ENCODE measurements at regions of chr7 and their contacts with region 1.

Region 1: GRCh38 chr7:100407285-100408180 is 21.0 kb downstream of the ZCWPW1 start:
- DNase-seq: peak; percentile 66
- ATAC-seq: peak; percentile 98
- H3K4me3 ChIP-seq: no peak overlapping the region
- H3K27ac ChIP-seq: no peak overlapping the region
- H3K4me1 ChIP-seq: peaks cover 7% of the 10 kb centered on the region
- H3K27me3 ChIP-seq: no peaks in the 10 kb centered on the region
- CTCF ChIP-seq: peak; percentile 69 to 82 (median 71)
- EP300 ChIP-seq: no peak
- POLR2A ChIP-seq: no peak
- RAD21 ChIP-seq: peak; percentile 87

Region 2: DNA sequence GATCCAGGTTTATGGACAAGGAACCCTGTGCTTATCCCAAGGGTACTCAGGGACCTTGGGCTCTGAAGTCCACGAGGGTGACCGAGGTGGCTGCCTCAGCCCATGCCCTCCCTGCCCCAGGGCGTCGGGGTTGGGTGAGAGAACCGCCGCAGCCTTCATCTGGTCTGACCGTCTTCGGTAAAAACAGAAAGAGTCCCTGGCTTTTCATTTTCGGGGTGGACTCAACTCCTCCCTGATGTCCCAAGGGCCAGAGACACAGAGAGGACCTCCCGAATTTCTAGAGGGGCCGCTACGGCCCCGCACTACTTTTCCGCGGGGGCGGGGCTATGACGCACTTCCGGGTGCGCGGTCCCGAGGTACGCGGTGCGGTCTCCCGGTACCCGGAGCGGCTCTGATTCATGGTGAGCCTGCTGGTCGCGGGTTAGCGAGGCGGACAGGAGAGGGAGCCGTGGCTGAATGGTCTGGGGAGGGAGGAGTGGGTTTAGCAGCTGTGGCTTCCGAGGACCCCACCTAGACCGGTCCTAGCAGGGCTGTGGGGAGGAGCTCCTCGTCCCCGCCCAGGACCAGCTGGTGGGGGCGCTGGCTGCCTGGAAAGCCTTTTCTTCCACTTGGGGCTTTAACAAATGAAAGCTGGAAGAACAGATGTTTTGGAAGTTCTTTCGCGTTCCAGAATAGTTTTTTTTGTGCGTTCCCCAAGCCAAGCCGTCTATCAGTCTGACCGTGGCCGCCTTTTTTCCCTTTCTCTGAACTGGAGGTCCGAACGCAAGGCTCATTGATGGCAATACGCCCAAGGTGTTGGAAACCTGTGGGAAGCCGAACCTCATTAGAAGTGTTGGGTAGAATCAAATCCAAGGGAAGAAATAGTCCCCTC is 357.9 kb before region 1 on chr7 and contains the start of gene ZSCAN21:
- CTCF ChIA-PET with region 1: no interaction called
- POLR2A ChIA-PET with region 1: no interaction called
- RAD21 ChIA-PET with region 1: no interaction called
- SMC1A ChIA-PET with region 1: no interaction called
- in situ Hi-C with region 1: no loop called
- intact Hi-C with region 1: no loop called
- DNase-seq: peak; percentile 25
- ATAC-seq: peak; percentile 95
- H3K4me3 ChIP-seq: peak within 1 kb of the TSS; percentile 83
- H3K27ac ChIP-seq: peak within 1 kb of the TSS; percentile 82
- H3K4me1 ChIP-seq: peaks cover 7% of the 10 kb centered on the region
- H3K27me3 ChIP-seq: no peaks in the 10 kb centered on the region
- CTCF ChIP-seq: peak in 2 of 3 experiments; percentile 15; a peak in 2 of 6 replicates
- EP300 ChIP-seq: no peak
- POLR2A ChIP-seq: peak; percentile 95
- RAD21 ChIP-seq: no peak
- polyA plus RNA-seq, gene ZSCAN21: 1.9 to 3.1 TPM

Region 3: DNA sequence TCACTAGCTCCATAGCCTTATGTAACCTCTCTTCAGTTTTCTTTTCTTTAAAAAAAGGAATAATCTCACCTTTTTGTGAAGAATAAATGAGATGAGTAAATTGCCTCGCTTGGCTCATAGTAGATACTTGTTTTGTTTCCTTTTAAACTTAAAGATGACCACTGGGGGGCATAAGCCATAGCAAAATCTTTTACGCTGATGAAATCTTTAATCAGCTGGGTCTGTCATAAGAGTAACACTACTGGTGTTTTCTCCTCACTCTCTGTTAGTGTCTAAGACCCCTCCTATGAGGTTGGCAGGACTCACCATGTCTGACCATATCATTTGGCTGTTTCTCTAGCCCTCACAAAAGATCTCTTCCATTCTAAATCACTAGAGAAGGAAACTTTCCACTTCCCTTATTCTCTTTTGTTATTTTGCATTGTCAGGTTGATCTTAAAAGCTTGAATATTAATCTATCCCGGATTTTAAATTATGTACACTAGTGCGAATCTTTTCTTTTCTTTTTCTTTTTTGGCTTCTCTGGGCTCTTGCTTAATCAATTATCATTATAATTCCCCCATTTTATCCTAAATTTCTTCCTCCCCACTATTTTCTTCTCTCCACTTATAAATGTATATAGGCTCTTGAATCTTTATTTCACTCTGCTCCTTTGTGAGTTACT is 217.4 kb before region 1 on chr7:
- CTCF ChIA-PET with region 1: interaction called, 19 read pairs
- POLR2A ChIA-PET with region 1: no interaction called
- RAD21 ChIA-PET with region 1: interaction called, 5 read pairs
- SMC1A ChIA-PET with region 1: interaction called, 9 read pairs
- in situ Hi-C with region 1: no loop called
- intact Hi-C with region 1: no loop called
- DNase-seq: no peak
- ATAC-seq: peak; percentile 83
- H3K4me3 ChIP-seq: no peak overlapping the region
- H3K27ac ChIP-seq: no peak overlapping the region
- H3K4me1 ChIP-seq: peaks cover 29% of the 10 kb centered on the region
- H3K27me3 ChIP-seq: no peaks in the 10 kb centered on the region
- CTCF ChIP-seq: peak; percentile 42 to 55 (median 44); a peak in 5 of 6 replicates
- EP300 ChIP-seq: no peak
- POLR2A ChIP-seq: no peak
- RAD21 ChIP-seq: peak; percentile 71

Region 4: DNA sequence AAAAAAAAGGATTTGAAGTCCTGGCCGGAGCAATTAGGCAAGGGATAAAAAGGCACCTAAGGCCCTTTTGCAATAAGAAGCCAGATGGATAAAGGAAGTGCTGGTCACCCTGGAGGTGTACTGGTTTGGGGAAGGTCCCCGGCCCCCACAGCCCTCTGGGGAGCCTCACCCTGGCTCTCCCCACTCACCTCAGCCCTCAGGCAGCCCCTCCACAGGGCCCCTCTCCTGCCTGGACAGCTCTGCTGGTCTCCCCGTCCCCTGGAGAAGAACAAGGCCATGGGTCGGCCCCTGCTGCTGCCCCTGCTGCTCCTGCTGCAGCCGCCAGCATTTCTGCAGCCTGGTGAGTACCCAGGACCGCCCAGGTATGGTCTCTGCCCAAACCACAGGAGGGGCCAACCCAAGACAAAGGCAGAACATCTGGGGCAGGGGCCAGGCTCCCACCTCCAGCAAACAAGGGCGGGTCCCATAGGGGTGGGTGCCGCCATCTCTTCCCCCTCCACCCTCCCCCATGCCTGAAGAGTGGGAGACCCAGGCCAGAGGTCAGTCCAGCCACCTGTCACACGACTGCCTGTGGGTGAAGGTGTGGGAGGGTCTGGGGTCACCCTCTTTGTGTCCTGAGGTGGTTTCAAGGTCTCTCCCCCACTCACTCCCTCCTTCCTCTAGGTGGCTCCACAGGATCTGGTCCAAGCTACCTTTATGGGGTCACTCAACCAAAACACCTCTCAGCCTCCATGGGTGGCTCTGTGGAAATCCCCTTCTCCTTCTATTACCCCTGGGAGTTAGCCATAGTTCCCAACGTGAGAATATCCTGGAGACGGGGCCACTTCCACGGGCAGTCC is 49.3 kb before region 1 on chr7 and contains the start of gene PILRB:
- CTCF ChIA-PET with region 1: interaction called, 37 read pairs
- POLR2A ChIA-PET with region 1: interaction called, 3 read pairs
- RAD21 ChIA-PET with region 1: interaction called, 11 read pairs
- SMC1A ChIA-PET with region 1: interaction called, 19 read pairs
- in situ Hi-C with region 1: no loop called
- intact Hi-C with region 1: loop called (anchors 1 kb)
- DNase-seq: no peak
- ATAC-seq: peak; percentile 89
- H3K4me3 ChIP-seq: no peak within 1 kb of the TSS
- H3K27ac ChIP-seq: peak within 1 kb of the TSS; percentile 62
- H3K4me1 ChIP-seq: peaks cover 14% of the 10 kb centered on the region
- H3K27me3 ChIP-seq: no peaks in the 10 kb centered on the region
- CTCF ChIP-seq: peak; percentile 23 to 51 (median 48); a peak in 4 of 6 replicates
- EP300 ChIP-seq: no peak
- POLR2A ChIP-seq: peak; percentile 17; the same call in 1 of the 2 replicates
- RAD21 ChIP-seq: peak; percentile 31
- polyA plus RNA-seq, gene PILRB: 2.6 to 5.6 TPM

Region 5: DNA sequence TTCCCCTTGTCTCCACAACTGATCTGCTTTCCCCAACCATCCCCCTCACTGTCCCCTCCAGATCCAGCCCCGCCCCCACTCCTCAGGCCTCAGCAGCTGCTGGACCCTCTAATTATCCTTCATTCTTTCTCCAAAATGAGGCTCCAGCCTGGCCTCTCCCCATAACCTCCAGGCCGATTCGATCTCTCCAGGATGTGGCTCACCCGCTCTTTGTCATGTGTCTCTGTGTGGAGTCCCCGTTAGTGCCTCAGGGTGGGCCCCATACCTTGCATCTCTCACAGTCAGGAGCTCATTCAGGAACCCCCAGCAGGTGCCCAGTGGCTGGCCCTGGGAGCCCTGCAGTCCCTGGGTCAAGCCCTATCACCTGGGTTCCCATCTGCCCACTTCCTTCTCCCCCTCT is 32.9 kb before region 1 on chr7:
- CTCF ChIA-PET with region 1: interaction called, 134 read pairs
- POLR2A ChIA-PET with region 1: interaction called, 10 read pairs
- RAD21 ChIA-PET with region 1: interaction called, 89 read pairs
- SMC1A ChIA-PET with region 1: interaction called, 65 read pairs
- in situ Hi-C with region 1: no loop called
- intact Hi-C with region 1: loop called (anchors 2 kb)
- DNase-seq: no peak
- ATAC-seq: peak; percentile 68
- H3K4me3 ChIP-seq: peak overlapping the region; percentile 61
- H3K27ac ChIP-seq: peak overlapping the region; percentile 78
- H3K4me1 ChIP-seq: peaks cover 28% of the 10 kb centered on the region
- H3K27me3 ChIP-seq: no peaks in the 10 kb centered on the region
- CTCF ChIP-seq: no peak
- EP300 ChIP-seq: no peak
- POLR2A ChIP-seq: no peak
- RAD21 ChIP-seq: no peak

Region 6: GRCh38 chr7:100390286-100391009 is 17.1 kb before region 1 on chr7:
- CTCF ChIA-PET with region 1: interaction called, 25 read pairs
- POLR2A ChIA-PET with region 1: interaction called, 10 read pairs
- RAD21 ChIA-PET with region 1: interaction called, 7 read pairs
- SMC1A ChIA-PET with region 1: interaction called, 30 read pairs
- in situ Hi-C with region 1: no loop called
- intact Hi-C with region 1: no loop called
- DNase-seq: no peak
- ATAC-seq: no peak
- H3K4me3 ChIP-seq: no peak overlapping the region
- H3K27ac ChIP-seq: no peak overlapping the region
- H3K4me1 ChIP-seq: peaks cover 16% of the 10 kb centered on the region
- H3K27me3 ChIP-seq: no peaks in the 10 kb centered on the region
- CTCF ChIP-seq: no peak
- EP300 ChIP-seq: no peak
- POLR2A ChIP-seq: no peak
- RAD21 ChIP-seq: no peak

Region 7: DNA sequence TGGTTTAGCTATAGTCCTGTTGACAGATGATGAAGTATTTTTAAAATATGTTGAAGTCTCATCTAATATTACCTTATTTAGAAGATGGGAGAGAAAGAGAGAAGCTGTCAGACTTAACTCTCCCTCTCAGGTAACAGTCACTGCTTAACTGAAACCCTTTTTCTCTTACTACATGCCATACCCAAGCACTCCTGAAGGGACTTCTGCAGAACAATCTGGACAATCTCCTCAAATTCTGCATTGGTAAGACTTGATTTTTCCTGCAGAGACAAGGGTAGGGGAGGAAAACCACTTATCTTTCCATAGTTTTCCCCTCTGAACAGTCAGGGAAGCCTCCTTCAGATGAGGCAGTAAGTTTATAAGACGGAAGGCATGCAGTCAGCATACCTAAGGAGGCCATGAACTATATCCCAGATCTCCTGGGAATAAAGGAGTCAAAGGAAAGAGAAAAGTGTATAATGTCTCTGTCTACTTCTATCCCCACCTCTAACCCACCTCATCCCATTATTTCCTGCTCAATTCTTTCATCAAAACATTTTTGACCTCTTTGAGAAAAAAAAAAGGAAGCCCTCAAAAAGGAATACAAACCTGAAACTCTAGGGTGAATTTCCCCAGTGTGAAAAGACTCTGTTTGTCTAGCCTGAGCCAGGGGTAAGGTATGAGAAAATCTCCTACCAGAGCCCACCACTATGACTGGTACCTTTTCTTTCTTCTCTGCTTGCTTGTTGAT is 11.6 kb after region 1 on chr7:
- CTCF ChIA-PET with region 1: interaction called, 18 read pairs
- POLR2A ChIA-PET with region 1: interaction called, 5 read pairs
- RAD21 ChIA-PET with region 1: interaction called, 12 read pairs
- SMC1A ChIA-PET with region 1: interaction called, 12 read pairs
- in situ Hi-C with region 1: no loop called
- intact Hi-C with region 1: no loop called
- DNase-seq: no peak
- ATAC-seq: peak; percentile 80
- H3K4me3 ChIP-seq: no peak overlapping the region
- H3K27ac ChIP-seq: peak overlapping the region; percentile 35; the same call in 1 of the 2 replicates
- H3K4me1 ChIP-seq: peaks cover 16% of the 10 kb centered on the region
- H3K27me3 ChIP-seq: no peaks in the 10 kb centered on the region
- CTCF ChIP-seq: peak in 2 of 3 experiments; percentile 2 to 18; a peak in 1 of 6 replicates
- EP300 ChIP-seq: no peak
- POLR2A ChIP-seq: no peak
- RAD21 ChIP-seq: no peak

Region 8: DNA sequence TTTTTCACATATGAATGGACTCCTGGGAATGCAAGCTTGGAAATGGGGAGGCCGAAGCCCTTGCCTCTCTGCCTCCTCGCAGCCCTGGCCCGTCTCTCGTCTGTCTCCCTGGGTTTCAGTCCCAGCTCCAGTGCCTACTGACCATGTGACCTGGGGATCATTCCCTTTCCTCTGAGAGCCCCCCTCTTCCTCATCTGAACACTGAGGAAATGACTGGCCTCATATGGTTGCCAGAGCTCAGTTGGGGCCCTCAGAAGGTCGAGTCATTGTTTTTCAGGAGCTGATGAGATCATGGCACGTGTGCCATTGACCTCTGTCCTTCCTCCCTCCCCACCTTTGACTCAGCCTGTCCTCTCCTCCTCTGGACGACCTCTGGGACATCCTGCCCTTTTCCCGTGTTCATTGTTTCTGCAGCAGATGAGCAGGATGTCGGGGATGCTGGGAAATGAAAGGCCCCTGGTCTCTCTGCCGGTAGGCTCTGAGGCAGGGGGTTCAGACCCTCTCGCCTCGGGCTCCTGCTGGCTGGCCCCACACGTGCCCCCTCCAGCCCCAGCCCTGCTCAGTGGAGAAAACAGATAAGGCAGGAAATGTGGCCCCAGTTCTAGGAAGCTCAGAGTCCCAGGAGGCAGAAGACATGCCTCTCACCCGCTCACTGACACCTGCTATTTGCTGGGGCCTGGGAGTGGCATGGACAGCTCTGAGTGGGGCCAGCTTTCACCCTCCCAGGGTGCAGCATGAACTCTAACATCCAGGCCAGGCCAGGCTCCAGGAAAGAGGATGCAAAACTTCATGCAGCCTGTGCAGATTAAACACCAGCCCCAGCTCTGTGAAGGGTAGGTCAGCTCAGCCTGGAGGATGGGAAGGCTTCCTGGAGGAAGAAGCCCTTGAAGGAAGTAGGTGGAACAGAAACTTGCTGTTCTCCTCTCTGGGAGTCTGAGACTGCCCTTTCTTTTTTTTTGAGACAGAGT is 37.1 kb after region 1 on chr7:
- CTCF ChIA-PET with region 1: interaction called, 11 read pairs
- POLR2A ChIA-PET with region 1: no interaction called
- RAD21 ChIA-PET with region 1: no interaction called
- SMC1A ChIA-PET with region 1: interaction called, 17 read pairs
- in situ Hi-C with region 1: no loop called
- intact Hi-C with region 1: no loop called
- DNase-seq: no peak
- ATAC-seq: peak; percentile 70
- H3K4me3 ChIP-seq: no peak overlapping the region
- H3K27ac ChIP-seq: peak overlapping the region; percentile 3; the same call in 1 of the 2 replicates
- H3K4me1 ChIP-seq: peaks cover 14% of the 10 kb centered on the region
- H3K27me3 ChIP-seq: no peaks in the 10 kb centered on the region
- CTCF ChIP-seq: no peak
- EP300 ChIP-seq: no peak
- POLR2A ChIP-seq: no peak
- RAD21 ChIP-seq: no peak

Measured in GM12878 (cell line).